ENCODE measurements at regions of chr6 and their contacts with region 1.

Region 1: GRCh38 chr6:45677381-45678284 is 299.9 kb upstream of the SUPT3H start:
- DNase-seq: peak; percentile 87
- ATAC-seq: peak; percentile 76
- H3K4me3 ChIP-seq: peak overlapping the region in 3 of 5 experiments; percentile 0 to 39 (median 10)
- H3K4me3 Mint-ChIP-seq: peak overlapping the region; percentile 68
- H3K27ac ChIP-seq: peak overlapping the region; percentile 54 to 79
- H3K27ac Mint-ChIP-seq: peak overlapping the region; percentile 69
- H3K4me1 ChIP-seq: peaks cover 43 to 61% of the 10 kb centered on the region in 2 donors
- H3K4me1 Mint-ChIP-seq: peaks cover 55% of the 10 kb centered on the region
- H3K27me3 ChIP-seq: peaks cover 0 to 3% (median 0%) of the 10 kb centered on the region in 4 experiments
- H3K27me3 Mint-ChIP-seq: no peaks in the 10 kb centered on the region
- CTCF ChIP-seq: no peak

Region 2: DNA sequence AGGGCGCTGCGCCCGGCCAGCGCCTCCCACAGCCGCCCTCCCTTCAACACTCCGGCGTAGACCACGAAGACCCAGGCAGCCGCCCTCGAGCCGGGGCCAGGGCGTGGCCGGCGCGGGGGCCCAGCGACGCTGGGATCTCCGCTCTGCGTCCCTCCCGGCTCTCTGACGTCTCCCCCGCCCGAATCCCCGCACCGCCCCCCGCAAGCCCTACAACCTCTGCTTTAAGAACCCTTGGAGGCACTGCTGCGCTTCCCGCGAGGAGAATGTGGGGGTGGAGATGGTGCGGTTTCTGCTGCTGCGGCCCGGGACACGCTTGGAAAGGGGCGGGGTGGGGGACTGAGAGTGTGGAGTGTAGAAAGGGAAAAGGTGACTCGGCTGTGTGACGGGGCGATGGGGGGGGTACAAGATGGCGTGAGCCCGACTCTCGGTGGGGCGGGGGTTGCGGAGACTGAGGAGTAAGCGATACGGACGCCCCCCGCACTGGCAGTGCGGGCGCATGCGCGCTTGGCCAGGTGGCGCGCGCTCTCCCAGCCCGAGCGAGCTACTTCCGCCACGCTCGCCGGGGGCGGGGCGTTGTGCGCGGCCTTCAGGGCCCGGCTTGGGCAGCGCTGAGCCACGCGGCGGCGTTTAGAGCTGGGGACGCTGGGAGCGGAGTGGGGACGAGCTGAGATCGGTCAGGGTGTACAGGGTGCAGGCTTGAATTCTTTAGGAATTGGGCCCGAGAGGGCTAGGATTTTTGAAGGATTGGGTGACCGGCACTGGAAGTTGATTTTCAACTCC is 299.9 kb before region 1 on chr6 and contains the start of gene SUPT3H:
- CTCF ChIA-PET with region 1: no interaction called
- POLR2A ChIA-PET with region 1: interaction called, 3 read pairs
- intact Hi-C with region 1: loop called (anchors 1 kb)
- DNase-seq: peak; percentile 95
- ATAC-seq: peak; percentile 77
- H3K4me3 ChIP-seq: peak within 1 kb of the TSS; percentile 76 to 98 (median 93)
- H3K4me3 Mint-ChIP-seq: peak within 1 kb of the TSS; percentile 98
- H3K27ac ChIP-seq: peak within 1 kb of the TSS; percentile 97
- H3K27ac Mint-ChIP-seq: peak within 1 kb of the TSS; percentile 97
- H3K4me1 ChIP-seq: peaks cover 9 to 12% of the 10 kb centered on the region in 2 donors
- H3K4me1 Mint-ChIP-seq: peaks cover 28% of the 10 kb centered on the region
- H3K27me3 ChIP-seq: no peaks in the 10 kb centered on the region
- H3K27me3 Mint-ChIP-seq: no peaks in the 10 kb centered on the region
- CTCF ChIP-seq: no peak
- total RNA-seq, gene SUPT3H: 12.4 and 14.1 TPM in 2 replicates

Region 3: DNA sequence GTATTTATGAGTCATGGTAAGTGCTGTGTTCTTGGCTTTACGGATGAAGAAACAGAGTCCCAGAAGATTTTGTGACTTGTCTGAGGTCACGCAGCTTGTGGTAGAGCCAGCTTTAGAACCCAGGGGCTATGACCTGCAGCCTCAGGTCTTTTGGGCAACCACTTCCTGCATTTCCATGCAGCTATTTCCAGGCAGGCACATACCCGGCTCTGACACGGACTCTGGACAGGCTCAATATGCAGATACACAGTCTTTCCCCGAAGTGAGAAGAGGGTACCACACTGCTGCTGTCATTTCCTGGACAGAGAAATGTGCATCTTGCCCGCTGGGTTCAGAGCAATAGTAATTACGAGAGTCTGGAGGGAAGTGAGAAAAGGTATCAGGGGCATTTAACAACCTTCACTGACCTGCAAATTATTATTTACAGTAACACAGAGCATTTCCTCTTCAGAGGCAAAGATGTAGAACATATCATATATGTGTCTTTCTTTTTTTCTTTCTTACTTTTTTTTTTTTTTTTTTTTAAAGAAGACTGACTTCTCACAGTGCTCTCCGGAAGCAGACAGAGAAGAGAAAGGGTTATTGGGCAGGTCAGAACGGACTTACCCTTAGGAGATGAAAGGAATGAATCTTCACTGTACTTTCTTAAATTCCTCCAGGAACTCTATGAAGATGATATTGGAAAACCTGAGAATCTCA is 153.0 kb after region 1 on chr6:
- CTCF ChIA-PET with region 1: no interaction called
- POLR2A ChIA-PET with region 1: no interaction called
- intact Hi-C with region 1: loop called (anchors 5 kb)
- DNase-seq: peak; percentile 71
- ATAC-seq: peak; percentile 79
- H3K4me3 ChIP-seq: peak overlapping the region in 3 of 5 experiments; percentile 10 to 11 (median 10)
- H3K4me3 Mint-ChIP-seq: peak overlapping the region; percentile 85
- H3K27ac ChIP-seq: peak overlapping the region in 1 of 2 donors; percentile 6
- H3K27ac Mint-ChIP-seq: peak overlapping the region; percentile 3
- H3K4me1 ChIP-seq: peaks cover 23 to 32% of the 10 kb centered on the region in 2 donors
- H3K4me1 Mint-ChIP-seq: peaks cover 34% of the 10 kb centered on the region
- H3K27me3 ChIP-seq: peaks cover 0 to 3% (median 0%) of the 10 kb centered on the region in 4 experiments
- H3K27me3 Mint-ChIP-seq: peaks cover 4% of the 10 kb centered on the region
- CTCF ChIP-seq: no peak

Measured in B cell (primary cell).